Posterior vena cava (tissue), 2 donors: ENCODE measurements at regions of chr3 and their contacts with region 1.

Region 1: DNA sequence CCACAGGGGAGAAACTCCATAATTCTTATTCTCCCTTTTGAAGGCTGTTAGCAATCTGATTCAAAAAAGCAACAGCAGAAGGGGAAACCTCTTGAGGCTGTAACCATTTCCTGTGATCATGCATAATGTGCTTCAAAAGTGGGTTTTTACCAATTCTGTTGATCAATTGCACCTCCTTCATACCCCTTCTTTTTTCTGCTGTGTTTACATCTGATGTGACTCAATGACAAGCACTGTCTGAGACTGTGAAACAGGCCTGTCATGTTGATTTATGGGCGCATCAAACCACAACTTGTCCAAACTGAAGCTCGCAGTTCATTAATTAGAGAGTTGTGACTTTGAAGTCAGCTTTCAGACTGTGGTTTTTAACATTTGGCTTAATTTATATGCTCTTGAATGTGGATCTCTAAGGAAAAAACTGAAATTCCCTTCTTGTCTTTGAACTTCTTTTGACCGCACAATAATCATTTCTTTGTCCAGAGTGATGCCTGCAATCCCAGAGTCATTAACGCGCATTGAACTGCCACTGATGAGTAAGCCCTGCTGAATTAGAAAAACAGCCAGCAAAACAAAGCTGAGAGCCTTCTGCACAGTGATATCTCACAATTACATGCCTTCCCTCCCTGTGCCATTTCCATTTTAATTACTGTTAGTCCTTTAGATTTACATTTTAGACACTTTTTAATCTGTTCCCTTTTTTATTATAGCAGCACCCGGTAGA is 532.8 kb downstream of the FOXP1 start:
- DNase-seq: no peak

Region 2: DNA sequence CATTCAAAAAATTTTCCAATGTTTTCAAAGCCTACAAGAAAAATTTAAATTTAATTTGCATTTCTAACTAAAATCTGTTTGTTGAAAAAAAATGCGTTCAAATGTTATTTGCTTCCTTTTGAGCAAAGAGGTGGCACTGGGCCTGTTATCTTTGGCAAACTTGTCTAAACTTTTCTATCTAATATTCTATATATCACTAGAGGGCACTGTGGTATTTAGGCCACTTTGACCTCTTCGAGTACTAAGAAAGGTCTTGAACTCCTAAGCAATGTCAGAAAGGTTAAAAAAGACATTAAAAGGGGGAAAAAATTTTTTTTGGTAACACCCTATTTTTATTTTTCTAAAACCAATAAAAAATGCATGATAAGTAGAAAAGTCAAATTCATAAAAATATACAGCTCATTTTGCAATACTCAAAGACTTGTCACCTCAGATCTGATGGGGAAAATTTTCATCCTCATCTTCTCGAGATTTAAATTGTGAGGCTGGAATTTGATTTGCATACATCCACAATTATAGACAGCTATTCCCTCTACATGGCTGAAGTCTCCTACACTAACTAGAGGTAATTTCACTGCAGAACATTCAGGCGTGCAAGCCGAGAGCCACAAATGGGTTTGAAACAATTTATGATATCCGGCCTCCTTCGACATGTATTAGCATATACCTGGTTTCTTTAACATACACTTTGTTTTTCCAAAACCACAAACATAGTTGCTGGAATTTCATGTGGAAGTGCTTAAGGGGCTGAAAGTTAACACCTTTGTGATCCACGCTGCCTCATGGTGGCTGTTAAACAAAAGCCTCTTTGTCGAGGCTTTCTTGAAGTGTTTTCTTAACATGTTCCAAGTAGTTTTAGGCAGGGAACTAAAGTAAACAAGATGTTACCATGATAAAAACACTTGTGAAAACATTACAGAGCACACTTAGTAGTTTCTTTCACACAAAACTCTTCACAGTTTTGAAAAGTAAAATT is 43.6 kb before region 1 on chr3:
- intact Hi-C with region 1: loop called in 1 of 2 experiments (anchors 10 kb)
- DNase-seq: no peak

Region 3: GRCh38 chr3:71090207-71090606 is 39.5 kb after region 1 on chr3:
- intact Hi-C with region 1: no loop called
- DNase-seq: no peak